ENCODE measurements at regions of chr18 and their contacts with region 1.

Region 1: DNA sequence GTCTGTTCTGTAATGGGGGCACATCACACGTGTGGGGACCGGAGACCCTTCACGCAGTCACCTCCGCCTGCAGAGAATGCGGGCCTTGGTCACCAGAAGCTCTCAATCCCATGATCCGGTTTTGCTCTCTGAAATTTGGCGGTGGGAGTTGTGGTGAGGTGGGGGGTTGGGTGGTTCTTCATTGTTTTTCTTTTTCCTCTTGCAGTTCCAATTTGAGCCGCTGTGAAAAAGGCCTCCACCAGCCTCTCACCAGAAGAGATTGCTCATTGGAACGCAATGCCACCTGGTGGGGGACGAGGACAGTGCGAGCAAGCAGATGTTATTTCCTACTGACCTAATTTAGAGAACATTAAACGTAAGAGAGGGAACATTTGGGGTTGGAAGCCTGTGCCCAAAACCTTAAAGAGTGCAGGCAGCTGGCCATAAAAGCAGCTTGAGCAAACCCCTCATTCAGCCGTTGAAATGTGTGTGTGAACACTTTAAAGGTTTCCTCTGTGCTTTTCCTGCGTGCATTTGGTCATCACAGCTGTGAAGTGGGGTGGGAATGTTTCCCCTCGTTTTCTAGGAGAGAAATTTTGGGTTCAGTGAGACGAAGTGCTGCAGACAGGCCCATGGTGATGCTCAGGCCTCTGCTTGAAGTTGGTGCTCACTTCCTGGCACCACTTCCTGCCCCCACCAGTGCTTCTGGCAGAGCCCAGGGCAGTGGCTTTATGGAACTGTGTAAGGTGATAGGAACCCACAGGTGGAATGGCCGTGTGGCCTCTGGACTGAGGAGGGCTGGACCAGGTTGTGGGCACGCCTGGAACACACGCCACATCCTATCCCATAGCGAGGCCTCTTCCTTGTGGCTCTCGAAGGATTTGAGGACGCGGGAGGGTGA is 61.7 kb downstream of the ZCCHC2 start:
- DNase-seq: peak; percentile 88
- H3K4me3 Mint-ChIP-seq: no peak overlapping the region
- H3K27ac Mint-ChIP-seq: peak overlapping the region; percentile 65
- H3K4me1 Mint-ChIP-seq: peaks cover 8% of the 10 kb centered on the region
- H3K27me3 Mint-ChIP-seq: no peaks in the 10 kb centered on the region
- CTCF ChIP-seq: peak; percentile 82

Region 2: DNA sequence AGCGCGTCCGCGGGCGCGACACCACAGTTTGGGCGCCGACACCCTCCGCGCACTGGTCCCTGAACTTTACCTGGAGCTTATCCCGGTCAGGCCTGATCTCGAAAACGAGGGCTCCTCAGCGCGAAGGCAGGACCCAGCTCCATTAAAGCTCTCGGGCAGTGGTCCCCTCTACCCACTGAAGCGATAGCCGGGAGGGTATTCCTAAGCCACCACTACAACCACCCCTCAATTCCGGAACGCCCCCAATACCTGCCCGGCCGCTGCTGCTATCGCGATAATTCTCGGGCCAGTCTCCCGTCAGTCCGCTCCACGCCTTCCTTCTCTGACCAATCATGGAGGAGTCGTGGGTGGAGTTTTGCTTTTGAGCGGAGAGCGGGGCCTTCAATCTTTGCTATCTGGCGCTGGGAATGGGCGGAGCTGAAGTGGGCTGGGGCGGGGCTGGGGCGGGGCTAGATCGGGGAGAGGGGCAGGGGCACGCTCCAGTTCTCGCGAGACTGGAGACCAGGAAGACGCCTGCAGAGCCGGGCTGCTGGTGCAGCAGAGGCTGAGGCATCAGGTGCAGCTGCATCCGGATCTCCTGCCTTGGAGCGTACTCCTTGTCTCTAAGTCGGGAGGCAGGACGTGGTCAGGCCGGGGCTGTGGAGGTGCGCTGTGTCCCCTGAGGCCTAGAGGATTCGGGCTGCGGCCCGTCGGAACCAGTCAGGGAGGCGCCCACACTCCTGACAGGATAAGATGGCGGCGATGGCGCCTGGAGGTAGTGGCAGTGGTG is 397.5 kb before region 1 on chr18 and contains the starts of genes PIGN and RELCH:
- CTCF ChIA-PET with region 1: interaction called, 7 read pairs
- POLR2A ChIA-PET with region 1: interaction called, 5 read pairs
- intact Hi-C with region 1: loop called (anchors 1 kb)
- DNase-seq: peak; percentile 99
- H3K4me3 Mint-ChIP-seq: peak within 1 kb of the TSS; percentile 100
- H3K27ac Mint-ChIP-seq: peak within 1 kb of the TSS; percentile 95
- H3K4me1 Mint-ChIP-seq: peaks cover 11% of the 10 kb centered on the region
- H3K27me3 Mint-ChIP-seq: no peaks in the 10 kb centered on the region
- CTCF ChIP-seq: no peak
- total RNA-seq, gene PIGN: 29.4 and 29.5 TPM in 2 replicates
- total RNA-seq, gene RELCH: 20.7 and 24.7 TPM in 2 replicates

Region 3: GRCh38 chr18:62384610-62385099 is 199.8 kb before region 1 on chr18:
- CTCF ChIA-PET with region 1: no interaction called
- POLR2A ChIA-PET with region 1: no interaction called
- intact Hi-C with region 1: no loop called
- DNase-seq: peak; percentile 53
- H3K4me3 Mint-ChIP-seq: peak overlapping the region; percentile 47
- H3K27ac Mint-ChIP-seq: no peak overlapping the region
- H3K4me1 Mint-ChIP-seq: peaks cover 20% of the 10 kb centered on the region
- H3K27me3 Mint-ChIP-seq: no peaks in the 10 kb centered on the region
- CTCF ChIP-seq: no peak

Region 4: DNA sequence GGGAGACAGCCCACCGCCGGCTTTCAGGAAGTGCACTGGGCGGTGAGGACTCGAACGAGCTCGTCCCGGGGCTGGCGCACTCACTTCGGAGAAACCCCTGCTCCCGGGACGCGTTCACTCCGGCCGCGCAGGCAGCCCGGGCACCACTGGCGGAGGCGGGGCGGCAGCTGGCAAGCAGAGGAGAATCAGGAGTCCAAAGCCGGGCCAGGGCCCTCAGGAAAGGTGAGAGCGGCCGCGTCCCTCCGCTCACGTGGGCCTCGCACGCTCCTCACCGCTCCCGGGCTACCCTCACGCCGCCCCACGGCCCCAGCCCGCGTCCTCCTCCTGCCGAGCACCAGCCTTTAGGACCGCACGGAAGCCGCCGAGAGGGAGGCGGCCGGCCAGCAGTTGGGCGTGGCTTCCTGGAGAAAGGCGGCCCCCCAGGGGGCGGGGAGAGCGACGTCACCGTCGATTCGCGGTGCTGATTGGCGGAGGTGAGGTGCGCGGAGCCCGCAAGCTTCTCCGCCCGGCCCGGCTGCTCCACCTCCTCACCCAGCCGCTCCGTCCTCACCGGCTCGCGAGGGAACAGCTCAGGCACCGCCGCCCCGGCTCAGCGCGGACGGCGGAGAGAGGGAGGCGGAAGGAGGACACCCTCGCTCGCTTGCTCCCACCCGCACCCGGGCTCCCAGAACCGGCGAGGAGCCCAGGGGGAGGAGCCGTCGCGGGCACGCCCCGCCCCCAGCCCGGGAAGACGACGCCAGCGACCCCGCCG is 61.8 kb before region 1 on chr18 and contains the start of gene ZCCHC2:
- CTCF ChIA-PET with region 1: interaction called, 18 read pairs
- POLR2A ChIA-PET with region 1: interaction called, 3 read pairs
- intact Hi-C with region 1: loop called (anchors 1 kb)
- DNase-seq: peak; percentile 96
- H3K4me3 Mint-ChIP-seq: peak within 1 kb of the TSS; percentile 76
- H3K27ac Mint-ChIP-seq: peak within 1 kb of the TSS; percentile 58
- H3K4me1 Mint-ChIP-seq: peaks cover 13% of the 10 kb centered on the region
- H3K27me3 Mint-ChIP-seq: no peaks in the 10 kb centered on the region
- CTCF ChIP-seq: no peak
- total RNA-seq, gene ZCCHC2: 14.6 and 15.0 TPM in 2 replicates

Region 5: GRCh38 chr18:62602706-62603105 is 18.2 kb after region 1 on chr18:
- CTCF ChIA-PET with region 1: interaction called, 12 read pairs
- POLR2A ChIA-PET with region 1: no interaction called
- intact Hi-C with region 1: no loop called
- DNase-seq: no peak
- H3K4me3 Mint-ChIP-seq: no peak overlapping the region
- H3K27ac Mint-ChIP-seq: no peak overlapping the region
- H3K4me1 Mint-ChIP-seq: peaks cover 6% of the 10 kb centered on the region
- H3K27me3 Mint-ChIP-seq: peaks cover 59% of the 10 kb centered on the region
- CTCF ChIP-seq: no peak

Region 6: DNA sequence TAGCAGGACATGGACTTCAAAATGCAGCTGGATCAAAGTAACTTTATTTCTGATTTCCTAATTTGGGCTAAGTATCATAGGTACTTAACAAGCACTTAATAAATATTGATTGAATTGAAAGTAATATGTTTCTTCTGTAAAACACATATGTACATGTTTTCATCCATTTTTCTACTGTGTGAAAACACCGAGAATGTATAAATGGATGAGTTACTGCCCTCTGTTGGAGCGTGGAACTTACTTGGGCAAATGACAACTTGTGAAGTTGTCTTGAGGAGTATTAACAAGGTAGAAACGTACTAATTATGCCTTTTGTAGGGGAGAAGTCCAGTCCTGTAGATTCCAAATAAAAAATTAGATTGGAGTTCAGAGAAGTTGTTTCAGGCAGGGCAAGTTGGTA is 218.0 kb after region 1 on chr18:
- CTCF ChIA-PET with region 1: interaction called, 7 read pairs
- POLR2A ChIA-PET with region 1: no interaction called
- intact Hi-C with region 1: loop called (anchors 5 kb)
- DNase-seq: peak; percentile 47
- H3K4me3 Mint-ChIP-seq: no peak overlapping the region
- H3K27ac Mint-ChIP-seq: no peak overlapping the region
- H3K4me1 Mint-ChIP-seq: peaks cover 5% of the 10 kb centered on the region
- H3K27me3 Mint-ChIP-seq: no peaks in the 10 kb centered on the region
- CTCF ChIP-seq: peak; percentile 40

Region 7: DNA sequence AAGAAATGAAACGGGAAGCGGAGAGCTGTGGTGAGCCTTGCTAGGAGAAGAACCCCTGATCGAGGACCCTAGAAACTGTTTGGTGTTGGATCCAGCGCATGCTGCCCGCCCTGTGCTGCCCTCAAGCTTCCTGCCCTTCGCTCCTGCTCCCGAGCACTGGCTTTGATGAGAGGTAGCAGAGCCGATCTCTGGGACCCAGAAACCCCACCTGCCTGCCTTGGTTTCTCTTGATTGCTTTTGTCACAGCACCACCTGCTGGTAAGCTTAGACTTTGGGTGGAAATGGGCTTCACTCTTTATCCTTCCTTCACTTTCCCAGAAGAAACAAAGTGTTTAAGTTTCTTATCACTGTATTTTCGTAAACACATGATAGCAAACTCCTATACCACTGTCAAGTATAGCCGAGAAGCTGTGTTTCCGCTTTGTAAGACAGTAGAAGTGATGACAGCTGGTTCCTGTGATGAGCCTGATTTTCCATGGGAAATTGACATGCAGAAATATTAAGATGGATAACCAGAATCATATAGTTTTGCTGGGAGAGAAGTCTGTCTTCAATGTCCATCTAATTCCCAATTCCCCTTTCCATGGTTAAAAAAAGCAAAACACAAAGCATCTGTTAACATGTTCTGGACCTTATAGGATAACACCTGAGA is 398.2 kb after region 1 on chr18:
- CTCF ChIA-PET with region 1: interaction called, 72 read pairs
- POLR2A ChIA-PET with region 1: interaction called, 4 read pairs
- intact Hi-C with region 1: loop called (anchors 1 kb)
- DNase-seq: peak; percentile 71
- H3K4me3 Mint-ChIP-seq: no peak overlapping the region
- H3K27ac Mint-ChIP-seq: no peak overlapping the region
- H3K4me1 Mint-ChIP-seq: peaks cover 6% of the 10 kb centered on the region
- H3K27me3 Mint-ChIP-seq: no peaks in the 10 kb centered on the region
- CTCF ChIP-seq: peak; percentile 73

Region 8: GRCh38 chr18:63439334-63439733 is 854.9 kb after region 1 on chr18:
- CTCF ChIA-PET with region 1: no interaction called
- POLR2A ChIA-PET with region 1: no interaction called
- intact Hi-C with region 1: loop called (anchors 5 kb)
- DNase-seq: peak; percentile 71
- H3K4me3 Mint-ChIP-seq: no peak overlapping the region
- H3K27ac Mint-ChIP-seq: no peak overlapping the region
- H3K4me1 Mint-ChIP-seq: peaks cover 34% of the 10 kb centered on the region
- H3K27me3 Mint-ChIP-seq: no peaks in the 10 kb centered on the region
- CTCF ChIP-seq: peak; percentile 74

Measured in MCF 10A (cell line).